Calu3 (cell line): ENCODE measurements at regions of chr2 and their contacts with region 1.

Region 1: GRCh38 chr2:176126929-176127773 is 2.4 kb upstream of the HOXD8 start:
- DNase-seq: peak; percentile 60
- H3K4me3 Mint-ChIP-seq: no peak overlapping the region
- H3K27ac Mint-ChIP-seq: no peak overlapping the region
- H3K4me1 Mint-ChIP-seq: no peaks in the 10 kb centered on the region
- H3K27me3 Mint-ChIP-seq: no peaks in the 10 kb centered on the region
- CTCF ChIP-seq: peak; percentile 73

Region 2: DNA sequence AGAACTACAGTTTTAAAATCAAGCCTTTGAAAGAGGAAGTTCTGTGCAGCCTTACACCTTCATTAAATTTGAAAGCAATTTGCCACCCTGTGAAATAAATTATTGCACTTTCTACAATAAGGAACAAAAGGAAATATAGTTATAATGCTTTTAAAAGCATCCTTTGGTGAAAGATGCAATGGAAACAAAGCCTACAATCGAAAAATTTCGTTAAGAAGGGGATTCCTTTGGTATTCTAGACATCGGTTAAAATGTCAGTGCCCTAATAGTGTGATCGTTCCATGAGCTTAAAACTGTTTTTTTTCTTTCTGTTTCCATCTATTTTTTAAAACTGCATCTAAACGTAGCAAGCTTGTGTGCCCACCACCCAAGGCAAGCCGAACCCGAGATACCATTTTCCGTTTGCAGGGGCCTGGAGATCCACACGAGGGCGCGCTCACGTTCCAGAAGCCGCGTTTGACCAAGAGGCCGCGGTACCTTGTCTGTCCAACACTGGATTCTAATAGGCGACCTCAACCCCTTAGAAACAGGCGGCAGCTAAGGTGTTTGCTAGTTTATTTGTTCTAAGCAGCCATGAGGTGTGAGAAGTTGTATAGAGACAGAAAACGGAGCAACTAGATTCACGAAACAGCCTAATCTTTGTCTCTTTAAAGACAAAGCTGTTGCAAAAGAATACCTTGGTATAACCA is 16.0 kb before region 1 on chr2:
- CTCF ChIA-PET with region 1: no interaction called
- intact Hi-C with region 1: no loop called
- DNase-seq: no peak
- H3K4me3 Mint-ChIP-seq: no peak overlapping the region
- H3K27ac Mint-ChIP-seq: no peak overlapping the region
- H3K4me1 Mint-ChIP-seq: peaks cover 5% of the 10 kb centered on the region
- H3K27me3 Mint-ChIP-seq: peaks cover 71% of the 10 kb centered on the region
- CTCF ChIP-seq: no peak

Region 3: GRCh38 chr2:176251928-176252327 is 124.8 kb after region 1 on chr2:
- CTCF ChIA-PET with region 1: no interaction called
- intact Hi-C with region 1: no loop called
- DNase-seq: no peak
- H3K4me3 Mint-ChIP-seq: no peak overlapping the region
- H3K27ac Mint-ChIP-seq: no peak overlapping the region
- H3K4me1 Mint-ChIP-seq: peaks cover 9% of the 10 kb centered on the region
- H3K27me3 Mint-ChIP-seq: no peaks in the 10 kb centered on the region
- CTCF ChIP-seq: no peak

Region 4: GRCh38 chr2:176554101-176555048 is 427.2 kb after region 1 on chr2:
- CTCF ChIA-PET with region 1: interaction called, 4 read pairs
- intact Hi-C with region 1: loop called (anchors 5 kb)
- DNase-seq: peak; percentile 49
- H3K4me3 Mint-ChIP-seq: peak overlapping the region; percentile 73
- H3K27ac Mint-ChIP-seq: peak overlapping the region; percentile 64
- H3K4me1 Mint-ChIP-seq: peaks cover 17% of the 10 kb centered on the region
- H3K27me3 Mint-ChIP-seq: no peaks in the 10 kb centered on the region
- CTCF ChIP-seq: peak; percentile 48

Region 5: GRCh38 chr2:176638167-176639015 is 511.2 kb after region 1 on chr2:
- CTCF ChIA-PET with region 1: interaction called, 3 read pairs
- intact Hi-C with region 1: loop called (anchors 2 kb)
- DNase-seq: peak; percentile 87
- H3K4me3 Mint-ChIP-seq: peak overlapping the region; percentile 78
- H3K27ac Mint-ChIP-seq: peak overlapping the region; percentile 47
- H3K4me1 Mint-ChIP-seq: no peaks in the 10 kb centered on the region
- H3K27me3 Mint-ChIP-seq: no peaks in the 10 kb centered on the region
- CTCF ChIP-seq: peak; percentile 91

Region 6: GRCh38 chr2:176814306-176815052 is 687.3 kb after region 1 on chr2:
- CTCF ChIA-PET with region 1: interaction called, 4 read pairs
- intact Hi-C with region 1: loop called (anchors 2 kb)
- DNase-seq: no peak
- H3K4me3 Mint-ChIP-seq: no peak overlapping the region
- H3K27ac Mint-ChIP-seq: no peak overlapping the region
- H3K4me1 Mint-ChIP-seq: no peaks in the 10 kb centered on the region
- H3K27me3 Mint-ChIP-seq: no peaks in the 10 kb centered on the region
- CTCF ChIP-seq: peak; percentile 39

Region 7: GRCh38 chr2:177148477-177149154 is 1021.5 kb after region 1 on chr2:
- CTCF ChIA-PET with region 1: interaction called, 3 read pairs
- intact Hi-C with region 1: loop called (anchors 2 kb)
- DNase-seq: peak; percentile 89
- H3K4me3 Mint-ChIP-seq: peak overlapping the region; percentile 67
- H3K27ac Mint-ChIP-seq: peak overlapping the region; percentile 4
- H3K4me1 Mint-ChIP-seq: peaks cover 10% of the 10 kb centered on the region
- H3K27me3 Mint-ChIP-seq: peaks cover 9% of the 10 kb centered on the region
- CTCF ChIP-seq: peak; percentile 83

Region 8: GRCh38 chr2:177763532-177764265 is 1636.5 kb after region 1 on chr2:
- CTCF ChIA-PET with region 1: no interaction called
- intact Hi-C with region 1: loop called (anchors 10 kb)
- DNase-seq: peak; percentile 82
- H3K4me3 Mint-ChIP-seq: no peak overlapping the region
- H3K27ac Mint-ChIP-seq: no peak overlapping the region
- H3K4me1 Mint-ChIP-seq: peaks cover 3% of the 10 kb centered on the region
- H3K27me3 Mint-ChIP-seq: peaks cover 18% of the 10 kb centered on the region
- CTCF ChIP-seq: peak; percentile 89